ENCODE measurements at regions of chr7 and their contacts with region 1.

Region 1: GRCh38 chr7:3092468-3092867 is 48.8 kb upstream of the CARD11 start:
- DNase-seq: peak; percentile 71
- H3K4me3 Mint-ChIP-seq: peak overlapping the region; percentile 18
- H3K27ac Mint-ChIP-seq: peak overlapping the region; percentile 77
- H3K4me1 Mint-ChIP-seq: peaks cover 44% of the 10 kb centered on the region
- H3K27me3 Mint-ChIP-seq: no peaks in the 10 kb centered on the region

Region 2: DNA sequence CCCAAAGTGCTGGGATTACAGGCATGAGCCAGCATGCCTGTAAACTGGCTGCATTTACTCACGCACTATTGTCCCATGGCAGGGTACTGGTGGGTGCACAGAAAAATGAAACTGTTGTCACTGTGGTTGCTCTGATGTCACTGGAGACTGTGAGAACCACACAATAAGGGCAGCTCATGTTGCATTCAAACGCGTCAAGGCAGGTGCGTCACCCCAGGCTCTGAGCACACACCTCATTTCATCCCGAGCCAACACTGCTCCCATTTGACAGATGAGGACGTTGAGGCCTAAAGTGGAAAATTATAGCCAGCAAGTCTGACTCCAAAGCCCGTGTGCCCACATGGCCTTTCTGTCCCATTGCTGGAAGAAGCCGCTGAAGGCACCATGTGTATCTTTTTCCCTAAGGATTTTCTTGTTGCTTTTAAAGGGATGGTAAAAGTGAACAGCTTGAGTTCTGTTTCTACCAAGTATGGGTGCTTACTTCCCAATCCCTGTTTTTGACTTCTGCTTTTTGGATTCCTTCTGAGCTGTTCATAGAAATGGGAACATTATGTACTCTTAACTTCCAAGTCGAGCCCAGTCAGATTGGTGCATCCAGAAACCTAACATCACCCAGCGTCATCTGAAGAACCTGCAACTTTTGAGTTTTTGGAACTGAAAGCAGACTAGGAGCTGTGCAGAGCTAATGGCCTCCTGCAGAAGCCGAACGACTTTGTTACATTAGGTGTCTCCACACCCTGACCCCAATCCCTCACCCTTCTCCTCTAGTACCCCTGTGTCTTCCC is 11.3 kb after region 1 on chr7:
- intact Hi-C with region 1: loop called (anchors 1 kb)
- DNase-seq: no peak
- H3K4me3 Mint-ChIP-seq: no peak overlapping the region
- H3K27ac Mint-ChIP-seq: no peak overlapping the region
- H3K4me1 Mint-ChIP-seq: peaks cover 58% of the 10 kb centered on the region
- H3K27me3 Mint-ChIP-seq: no peaks in the 10 kb centered on the region

Region 3: GRCh38 chr7:3112479-3113134 is 20.1 kb after region 1 on chr7:
- intact Hi-C with region 1: loop called (anchors 2 kb)
- DNase-seq: peak; percentile 34
- H3K4me3 Mint-ChIP-seq: no peak overlapping the region
- H3K27ac Mint-ChIP-seq: peak overlapping the region; percentile 48
- H3K4me1 Mint-ChIP-seq: peaks cover 66% of the 10 kb centered on the region
- H3K27me3 Mint-ChIP-seq: no peaks in the 10 kb centered on the region

Region 4: DNA sequence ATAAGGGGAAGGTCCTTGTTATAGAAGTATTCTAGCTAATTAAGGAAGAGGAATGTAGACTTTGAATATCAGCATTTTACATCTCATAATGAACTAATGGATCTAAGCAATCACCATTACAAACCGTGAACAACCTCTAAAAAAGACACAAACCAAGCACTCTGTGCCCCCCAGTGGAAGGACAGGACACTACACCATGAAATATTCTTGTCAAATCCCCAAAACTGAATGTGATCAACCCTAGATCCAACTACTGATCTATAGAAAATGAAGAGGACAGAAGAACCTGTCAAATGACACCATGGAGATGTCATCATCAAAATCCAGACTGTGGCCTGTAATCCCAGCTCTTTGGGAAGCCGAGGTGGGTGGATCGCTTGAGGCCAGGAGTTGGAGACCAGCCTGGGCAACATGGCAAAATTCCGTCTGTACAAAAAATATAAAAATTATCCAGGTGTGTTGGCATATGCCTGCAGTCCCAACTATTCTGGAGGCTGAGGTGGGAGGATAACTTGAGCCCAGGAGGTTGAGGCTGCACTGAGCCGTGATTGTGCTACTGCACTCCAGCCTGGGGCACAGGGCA is 62.5 kb after region 1 on chr7:
- intact Hi-C with region 1: loop called (anchors 2 kb)
- DNase-seq: peak; percentile 48
- H3K4me3 Mint-ChIP-seq: no peak overlapping the region
- H3K27ac Mint-ChIP-seq: no peak overlapping the region
- H3K4me1 Mint-ChIP-seq: peaks cover 8% of the 10 kb centered on the region
- H3K27me3 Mint-ChIP-seq: peaks cover 11% of the 10 kb centered on the region

Measured in activated T-helper 2 cell treated with anti-CD3 and anti-CD28 coated beads, Interferon-gamma antibody, Interleukin-2, Interleukin-4, amounts not matched to agents 10 μg/mL and 5 μg/mL and 100 μg/mL, durations not matched to agents 14 hours and 24 hours and 36 hours (primary cell).